ENCODE measurements at regions of chr19 and their contacts with region 1.

Region 1: DNA sequence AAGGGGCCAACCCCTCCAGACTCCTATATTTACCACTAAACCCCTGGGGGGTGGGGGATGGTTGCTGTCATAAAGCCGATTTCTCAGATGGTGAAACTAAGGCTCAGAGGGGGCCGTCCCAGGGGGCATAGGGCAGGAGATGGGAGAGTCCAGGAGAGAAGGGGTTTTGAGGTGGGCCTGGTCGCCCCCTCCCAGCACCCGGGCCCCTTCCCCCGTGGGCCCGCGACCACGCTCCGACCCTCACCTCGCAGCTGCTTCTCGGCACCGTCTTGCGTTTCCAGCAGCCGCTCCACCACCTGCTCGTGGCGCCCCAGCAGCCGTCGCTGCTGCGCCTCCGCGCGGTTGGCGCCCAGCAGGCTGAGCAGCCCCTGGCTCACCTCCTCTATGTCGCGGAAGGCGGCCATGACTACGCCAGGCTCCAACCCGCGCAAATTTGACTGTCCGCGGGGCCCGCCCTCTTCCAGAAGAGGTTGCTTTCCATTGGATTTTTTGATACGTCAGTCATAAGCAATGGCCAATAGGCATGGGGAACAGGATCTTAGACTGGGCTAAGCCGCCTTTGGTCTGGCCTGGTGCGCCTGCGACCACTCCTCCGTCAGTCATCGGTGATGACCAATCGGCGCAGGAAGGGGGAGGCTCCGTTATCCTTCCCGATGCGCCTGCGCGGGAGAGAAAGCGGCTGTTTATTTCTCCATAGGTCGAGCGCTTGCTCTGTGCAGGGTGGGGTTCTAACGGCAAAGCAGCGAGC is at the start of gene SPC24:
- DNase-seq: peak; percentile 99 to 100 (median 100)
- ATAC-seq: peak; percentile 98
- H3K4me3 ChIP-seq: peak within 1 kb of the TSS; percentile 92
- H3K27ac ChIP-seq: peak within 1 kb of the TSS; percentile 90
- H3K4me1 ChIP-seq: peaks cover 16 to 20% of the 10 kb centered on the region in 2 experiments; a peak in 4 of 5 replicates
- H3K27me3 ChIP-seq: no peaks in the 10 kb centered on the region
- CTCF ChIP-seq: peak in 1 of 3 experiments; percentile 36; a peak in 1 of 6 replicates
- EP300 ChIP-seq: 0 out of 2 replicates have a peak, but pooled peaks have one; percentile 2
- POLR2A ChIP-seq: peak; percentile 97
- RAD21 ChIP-seq: no peak
- polyA plus RNA-seq, gene SPC24: 18.2 to 26.8 TPM

Region 2: DNA sequence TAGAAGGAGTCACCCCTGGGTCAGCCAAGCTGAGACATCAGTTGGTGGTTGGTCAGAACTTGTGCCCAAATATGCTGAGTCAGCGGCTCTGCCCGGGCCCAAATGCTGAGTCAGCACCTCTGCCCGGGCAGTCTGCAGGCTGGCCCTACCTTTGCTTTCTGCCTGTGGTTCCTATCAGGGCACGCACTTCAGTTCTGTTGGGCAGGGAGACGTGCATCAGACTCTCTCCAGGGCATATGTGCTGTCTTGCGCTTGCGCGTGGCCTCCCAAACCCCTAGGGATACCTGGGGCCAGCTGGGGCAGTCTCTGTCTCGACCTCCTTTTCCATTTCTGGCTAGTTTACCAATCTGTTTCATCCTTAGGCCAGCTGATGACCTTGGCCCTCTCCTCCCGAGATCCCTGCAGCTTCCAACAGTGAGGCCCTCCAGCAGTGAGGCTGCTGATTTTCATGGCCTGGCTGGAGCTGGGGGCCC is 90.7 kb before region 1 on chr19:
- CTCF ChIA-PET with region 1: no interaction called
- POLR2A ChIA-PET with region 1: no interaction called
- in situ Hi-C with region 1: no loop called
- intact Hi-C with region 1: no loop called
- DNase-seq: peak; percentile 48 to 56 (median 52)
- ATAC-seq: peak; percentile 33
- H3K4me3 ChIP-seq: no peak overlapping the region
- H3K27ac ChIP-seq: peak overlapping the region; percentile 11; the same call in 1 of the 3 replicates
- H3K4me1 ChIP-seq: peaks cover 0 to 27% of the 10 kb centered on the region in 2 experiments; a peak in 4 of 5 replicates
- H3K27me3 ChIP-seq: no peaks in the 10 kb centered on the region
- CTCF ChIP-seq: no peak
- EP300 ChIP-seq: no peak
- POLR2A ChIP-seq: no peak
- RAD21 ChIP-seq: no peak

Region 3: GRCh38 chr19:11137542-11138384 is 17.8 kb before region 1 on chr19:
- CTCF ChIA-PET with region 1: no interaction called
- POLR2A ChIA-PET with region 1: interaction called, 52 read pairs
- in situ Hi-C with region 1: no loop called
- intact Hi-C with region 1: no loop called
- DNase-seq: peak; percentile 73 to 89 (median 80)
- ATAC-seq: peak; percentile 70
- H3K4me3 ChIP-seq: peak overlapping the region; percentile 25
- H3K27ac ChIP-seq: peak overlapping the region; percentile 13; the same call in 1 of the 3 replicates
- H3K4me1 ChIP-seq: peaks cover 33 to 45% of the 10 kb centered on the region in 2 experiments
- H3K27me3 ChIP-seq: no peaks in the 10 kb centered on the region
- CTCF ChIP-seq: peak; percentile 86 to 92 (median 87)
- EP300 ChIP-seq: no peak
- POLR2A ChIP-seq: no peak
- RAD21 ChIP-seq: peak; percentile 94

Region 4: GRCh38 chr19:11197264-11198174 is 42.0 kb after region 1 on chr19 and contains the start of gene KANK2:
- CTCF ChIA-PET with region 1: no interaction called
- POLR2A ChIA-PET with region 1: interaction called, 4 read pairs
- in situ Hi-C with region 1: no loop called
- intact Hi-C with region 1: loop called (anchors 5 kb)
- DNase-seq: peak; percentile 87 to 98 (median 97)
- ATAC-seq: peak; percentile 94
- H3K4me3 ChIP-seq: peak within 1 kb of the TSS; percentile 70
- H3K27ac ChIP-seq: peak within 1 kb of the TSS; percentile 67
- H3K4me1 ChIP-seq: peaks cover 11 to 66% of the 10 kb centered on the region in 2 experiments; a peak in 4 of 5 replicates
- H3K27me3 ChIP-seq: no peaks in the 10 kb centered on the region
- CTCF ChIP-seq: peak; percentile 13 to 38 (median 24); a peak in 3 of 6 replicates
- EP300 ChIP-seq: no peak; the same call in 1 of the 2 replicates
- POLR2A ChIP-seq: peak; percentile 69
- RAD21 ChIP-seq: peak; percentile 9 to 35; a peak in 2 of 4 replicates
- polyA plus RNA-seq, gene KANK2: 4.4 to 5.6 TPM